ENCODE measurements at regions of chr2 and their contacts with region 1.

Region 1: DNA sequence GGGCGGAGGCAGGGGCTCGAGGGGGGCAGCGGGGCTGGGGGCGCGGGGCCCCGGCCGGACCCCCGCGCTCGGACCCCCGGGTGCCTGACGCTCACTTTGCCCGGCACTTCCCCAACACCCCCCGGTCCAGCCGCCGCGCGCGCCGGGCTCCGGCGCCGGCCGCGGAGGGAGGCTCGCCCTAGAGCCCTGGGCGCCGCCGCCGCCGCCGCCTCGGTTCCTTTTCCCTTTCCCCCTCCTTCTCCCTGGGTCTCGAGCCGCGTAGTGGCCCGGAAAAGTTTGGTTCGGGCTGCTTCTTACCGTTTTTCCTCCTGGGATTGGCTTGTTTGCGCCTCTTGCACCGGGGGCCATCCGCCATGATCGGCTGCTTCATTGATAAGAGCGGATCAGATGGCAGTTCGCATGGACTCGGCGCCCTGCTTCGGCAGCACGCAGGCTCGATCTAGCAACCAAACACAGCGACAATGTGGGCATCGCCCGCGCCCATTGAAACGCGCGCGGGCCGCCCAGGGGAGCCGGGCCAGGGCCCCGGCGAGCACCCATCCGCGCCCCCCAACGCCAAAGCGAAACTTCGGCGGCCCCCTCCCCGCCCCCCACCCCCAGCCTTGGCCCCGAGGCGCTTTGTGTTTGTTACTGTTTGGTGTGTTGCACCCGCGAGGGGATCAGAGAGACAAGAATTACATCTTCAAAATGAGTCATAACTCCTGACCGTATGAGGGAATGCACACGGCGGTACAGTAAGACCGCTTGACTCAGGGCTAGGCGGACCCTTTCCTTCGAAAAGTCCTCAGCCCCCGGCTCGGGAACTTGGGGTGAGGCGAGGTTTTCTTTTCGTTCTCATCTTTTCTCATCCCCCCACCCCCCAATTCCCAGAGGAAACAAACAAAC is 2.7 kb downstream of the ZEB2 start:
- DNase-seq: peak; percentile 32
- H3K4me3 ChIP-seq: peak overlapping the region; percentile 27 to 77 (median 58)
- H3K27ac ChIP-seq: peak overlapping the region; percentile 87 to 91 (median 88)
- H3K4me1 ChIP-seq: peaks cover 0 to 10% (median 0%) of the 10 kb centered on the region in 4 donors
- H3K27me3 ChIP-seq: peaks cover 97% of the 10 kb centered on the region
- CTCF ChIP-seq: no peak
- EP300 ChIP-seq: no peak
- POLR2A ChIP-seq: peak; percentile 40

Region 2: GRCh38 chr2:143936848-143937722 is 580.1 kb before region 1 on chr2:
- in situ Hi-C with region 1: loop called in 2 of 4 experiments (anchors 25 kb)
- intact Hi-C with region 1: no loop called
- DNase-seq: no peak
- H3K4me3 ChIP-seq: peak overlapping the region; percentile 17 to 52 (median 32)
- H3K27ac ChIP-seq: peak overlapping the region; percentile 65 to 81 (median 74)
- H3K4me1 ChIP-seq: peaks cover 0 to 16% (median 10%) of the 10 kb centered on the region in 4 donors
- H3K27me3 ChIP-seq: peaks cover 53% of the 10 kb centered on the region
- CTCF ChIP-seq: no peak
- EP300 ChIP-seq: no peak
- POLR2A ChIP-seq: no peak

Region 3: DNA sequence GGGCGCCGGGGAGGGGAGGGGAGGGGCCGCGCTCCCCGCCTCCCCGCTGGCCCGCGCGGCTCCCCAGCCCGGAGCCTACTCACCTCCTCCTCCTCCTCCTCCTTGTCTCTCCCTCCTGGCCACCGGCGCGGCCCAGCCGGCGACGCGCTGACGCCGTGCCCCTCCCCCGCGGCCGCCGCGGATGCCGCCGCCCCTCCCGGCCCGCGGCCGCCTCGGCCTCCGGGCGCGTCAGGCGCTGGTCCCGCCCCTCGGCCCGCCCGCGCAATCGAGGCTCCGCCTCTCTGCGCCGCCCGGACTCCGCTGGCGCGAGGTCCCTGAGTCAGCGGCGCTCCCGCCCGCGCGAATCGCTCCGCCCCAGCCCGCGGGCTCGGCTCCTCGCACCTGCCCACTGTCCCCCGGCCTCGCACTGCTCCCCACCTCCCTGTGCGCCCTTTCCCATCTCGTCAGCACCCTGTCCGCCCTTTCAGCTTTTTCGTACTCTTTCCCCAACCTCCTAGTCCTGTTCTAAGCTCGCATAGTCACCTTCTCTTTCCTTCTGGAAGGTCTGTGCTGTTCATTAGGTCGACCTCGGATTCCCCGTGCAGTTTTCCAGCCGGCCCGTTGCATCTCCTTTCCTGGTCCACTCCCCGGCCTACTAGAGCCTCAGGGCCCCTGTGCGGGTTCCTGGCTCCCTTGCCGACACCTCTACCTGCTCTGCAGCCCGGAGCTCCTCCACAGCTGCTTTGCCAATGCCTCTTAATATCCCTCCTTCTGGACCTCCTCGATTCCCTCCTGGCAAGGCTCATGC is 184.7 kb before region 1 on chr2:
- in situ Hi-C with region 1: no loop called
- intact Hi-C with region 1: loop called (anchors 10 kb)
- DNase-seq: peak; percentile 91
- H3K4me3 ChIP-seq: peak overlapping the region; percentile 43 to 84 (median 78)
- H3K27ac ChIP-seq: peak overlapping the region; percentile 91 to 92 (median 92)
- H3K4me1 ChIP-seq: peaks cover 0 to 19% (median 9%) of the 10 kb centered on the region in 4 donors
- H3K27me3 ChIP-seq: no peaks in the 10 kb centered on the region
- CTCF ChIP-seq: no peak
- EP300 ChIP-seq: no peak
- POLR2A ChIP-seq: peak; percentile 65

Region 4: GRCh38 chr2:144548532-144549191 is 31.4 kb after region 1 on chr2:
- in situ Hi-C with region 1: no loop called
- intact Hi-C with region 1: no loop called
- DNase-seq: no peak
- H3K4me3 ChIP-seq: no peak overlapping the region
- H3K27ac ChIP-seq: no peak overlapping the region
- H3K4me1 ChIP-seq: no peaks in the 10 kb centered on the region
- H3K27me3 ChIP-seq: no peaks in the 10 kb centered on the region
- CTCF ChIP-seq: no peak
- EP300 ChIP-seq: no peak
- POLR2A ChIP-seq: no peak

Region 5: DNA sequence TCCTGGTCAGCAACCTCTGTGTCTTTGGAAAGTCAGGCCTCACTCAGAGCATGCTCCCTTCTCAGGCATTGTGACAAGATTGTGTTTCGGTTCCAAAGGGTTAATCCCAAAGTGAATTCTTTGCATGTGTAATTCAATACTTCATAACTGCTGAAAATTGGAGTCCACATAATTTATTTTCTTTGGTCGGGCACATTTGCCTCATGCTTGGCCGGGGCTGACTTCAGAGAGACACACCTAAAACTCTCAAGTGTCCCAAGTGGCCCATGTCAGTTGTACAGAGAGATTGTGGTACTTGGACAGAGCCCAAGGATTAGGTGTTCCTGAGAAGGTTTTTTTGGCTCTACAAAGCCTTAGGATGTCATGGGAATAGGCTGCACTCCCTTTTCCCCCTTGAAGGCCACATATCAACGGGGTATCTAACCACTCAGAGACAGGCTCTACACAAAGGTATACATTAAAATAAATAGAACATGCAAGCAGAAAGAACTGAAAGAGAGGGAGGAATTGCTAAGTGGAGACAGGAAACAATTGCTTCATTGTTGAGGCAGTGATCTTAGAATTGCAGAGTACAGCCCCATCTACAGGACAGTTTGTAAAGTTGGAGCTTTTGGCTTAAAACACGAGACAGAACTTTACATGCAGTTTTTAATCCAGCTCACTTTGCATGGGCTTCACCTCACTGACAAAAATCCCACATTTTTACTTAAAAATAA is 1235.0 kb after region 1 on chr2:
- in situ Hi-C with region 1: loop called in 1 of 4 experiments (anchors 25 kb)
- intact Hi-C with region 1: no loop called
- DNase-seq: no peak
- H3K4me3 ChIP-seq: no peak overlapping the region
- H3K27ac ChIP-seq: peak overlapping the region; percentile 60 to 75 (median 66)
- H3K4me1 ChIP-seq: peaks cover 0 to 23% (median 0%) of the 10 kb centered on the region in 4 donors
- H3K27me3 ChIP-seq: no peaks in the 10 kb centered on the region
- CTCF ChIP-seq: peak; percentile 39 to 49 (median 43)
- EP300 ChIP-seq: no peak
- POLR2A ChIP-seq: no peak

Measured in transverse colon (tissue), 4 donors.